Posterior vena cava (tissue), 2 donors: ENCODE measurements at regions of chr10 and their contacts with region 1.

Region 1: DNA sequence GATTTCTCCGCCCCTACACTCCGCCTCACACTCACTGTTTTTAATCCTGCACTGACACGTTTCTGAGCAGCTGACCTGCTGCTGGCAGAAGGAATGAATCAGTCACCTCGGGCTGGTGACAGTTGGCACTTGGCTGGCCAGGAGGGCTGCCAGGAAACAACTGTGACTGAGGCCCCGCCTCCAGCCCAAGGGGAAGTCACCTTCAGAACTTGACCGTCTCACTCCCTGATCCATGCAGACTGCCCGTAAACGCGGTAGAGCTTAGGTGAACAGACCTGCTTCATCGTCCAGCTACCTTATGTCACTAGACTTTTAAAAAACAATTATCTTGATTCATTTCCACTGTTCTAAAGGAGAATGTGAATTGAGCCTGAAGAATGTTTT is 107.5 kb downstream of the DOCK1 start:
- DNase-seq: no peak

Region 2: DNA sequence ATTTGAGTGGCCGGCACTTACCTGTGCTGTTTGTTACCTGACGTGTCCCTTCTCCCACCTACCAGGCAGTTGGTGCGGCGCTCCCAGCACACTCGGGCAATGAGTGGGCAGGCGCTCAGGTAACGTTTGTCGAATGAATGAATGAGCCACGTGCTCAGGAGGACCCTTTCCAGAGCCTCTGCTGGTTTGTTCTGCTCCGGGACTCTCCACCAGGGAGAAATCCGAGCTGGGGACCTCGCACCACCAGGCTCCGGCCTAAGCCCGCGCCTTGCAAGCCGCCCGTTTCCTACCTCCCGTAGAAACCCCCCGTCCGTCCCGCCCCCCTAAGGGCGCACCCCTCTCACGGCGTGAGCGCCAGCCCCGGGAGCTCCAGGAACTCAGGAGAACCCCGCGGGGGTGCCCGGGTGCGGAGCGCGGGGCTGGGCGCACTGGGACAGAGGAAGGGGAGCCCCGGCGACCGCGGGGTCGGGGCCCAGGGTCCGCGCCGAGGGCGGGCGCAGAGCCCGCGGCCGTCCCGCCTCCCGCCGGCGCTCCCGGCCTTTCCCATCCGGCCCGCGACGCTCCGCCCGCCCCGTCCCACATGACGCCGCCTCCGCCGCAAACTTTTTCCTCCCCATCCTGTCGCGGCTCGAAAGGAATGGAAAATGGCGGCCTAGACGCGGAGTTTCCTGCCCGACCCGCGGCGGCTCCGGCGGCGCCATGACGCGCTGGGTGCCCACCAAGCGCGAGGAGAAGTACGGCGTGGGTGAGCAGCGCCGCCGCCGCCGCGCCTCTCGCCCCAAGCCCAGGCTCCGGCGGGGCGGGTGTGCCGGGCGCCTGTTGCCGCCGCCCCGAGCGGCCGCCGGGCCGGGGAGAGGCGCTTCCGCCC is 107.7 kb before region 1 on chr10 and contains the start of gene DOCK1:
- intact Hi-C with region 1: loop called in 1 of 2 experiments (anchors 10 kb)
- DNase-seq: peak; percentile 90
- total RNA-seq, gene DOCK1: 46.7 to 50.8 TPM

Region 3: GRCh38 chr10:127067542-127068194 is 54.9 kb after region 1 on chr10:
- intact Hi-C with region 1: no loop called
- DNase-seq: no peak